ENCODE measurements at regions of chr4 and their contacts with region 1.

Region 1: DNA sequence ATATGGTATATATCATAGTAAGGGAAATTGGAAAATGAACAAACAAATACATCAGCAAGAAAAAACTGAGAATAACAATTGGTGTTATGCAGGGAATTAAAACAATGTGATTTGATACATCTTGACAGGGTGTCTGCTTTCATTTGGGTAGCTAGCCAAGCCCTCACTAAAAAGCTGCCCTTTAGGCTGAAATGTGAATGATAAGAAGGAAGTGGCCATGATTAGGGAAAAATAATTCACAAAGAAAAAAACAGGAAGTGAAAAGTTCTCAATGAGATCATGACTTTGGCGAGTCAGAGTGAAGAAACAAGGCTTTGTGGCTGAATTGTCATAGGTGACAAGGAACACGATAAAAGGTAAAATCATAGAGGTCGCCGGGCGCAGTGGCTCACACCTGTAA is 675.8 kb upstream of the SLIT2 start:
- DNase-seq: no peak
- CTCF ChIP-seq: no peak

Region 2: GRCh38 chr4:19562456-19562855 is 13.5 kb before region 1 on chr4:
- CTCF ChIA-PET with region 1: interaction called, 10 read pairs
- POLR2A ChIA-PET with region 1: no interaction called
- DNase-seq: no peak
- CTCF ChIP-seq: no peak

Region 3: GRCh38 chr4:19905024-19905423 is 329.1 kb after region 1 on chr4:
- CTCF ChIA-PET with region 1: no interaction called
- POLR2A ChIA-PET with region 1: no interaction called
- DNase-seq: no peak
- CTCF ChIP-seq: no peak